ENCODE measurements at regions of chr6 and their contacts with region 1.

Region 1: DNA sequence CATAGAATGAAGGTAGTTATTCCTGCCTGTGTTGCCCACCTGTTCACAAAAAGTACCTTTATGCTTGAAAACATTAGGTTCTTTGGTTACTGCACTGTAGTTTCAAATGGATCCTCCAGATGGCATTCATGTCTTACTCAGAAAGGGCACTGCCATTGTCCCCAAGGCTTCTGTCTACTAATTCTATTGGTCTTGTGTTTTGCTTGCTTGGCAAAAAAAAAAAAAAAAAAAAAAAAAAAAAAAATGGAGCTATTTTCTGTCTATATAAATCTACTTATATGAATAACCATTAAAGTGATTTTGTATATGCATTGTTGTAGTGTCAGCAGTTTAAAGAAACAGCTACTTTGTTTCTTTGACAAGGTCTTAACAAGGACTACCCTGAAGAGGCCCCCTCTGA is 12.7 kb upstream of the EFHC1 start:
- DNase-seq: no peak
- ATAC-seq: peak; percentile 91
- H3K4me3 ChIP-seq: no peak overlapping the region
- H3K27ac ChIP-seq: no peak overlapping the region
- H3K4me1 ChIP-seq: no peaks in the 10 kb centered on the region
- H3K27me3 ChIP-seq: no peaks in the 10 kb centered on the region
- CTCF ChIP-seq: peak; percentile 50 to 59 (median 57); a peak in 5 of 6 replicates
- EP300 ChIP-seq: no peak
- POLR2A ChIP-seq: no peak
- RAD21 ChIP-seq: peak; percentile 70

Region 2: DNA sequence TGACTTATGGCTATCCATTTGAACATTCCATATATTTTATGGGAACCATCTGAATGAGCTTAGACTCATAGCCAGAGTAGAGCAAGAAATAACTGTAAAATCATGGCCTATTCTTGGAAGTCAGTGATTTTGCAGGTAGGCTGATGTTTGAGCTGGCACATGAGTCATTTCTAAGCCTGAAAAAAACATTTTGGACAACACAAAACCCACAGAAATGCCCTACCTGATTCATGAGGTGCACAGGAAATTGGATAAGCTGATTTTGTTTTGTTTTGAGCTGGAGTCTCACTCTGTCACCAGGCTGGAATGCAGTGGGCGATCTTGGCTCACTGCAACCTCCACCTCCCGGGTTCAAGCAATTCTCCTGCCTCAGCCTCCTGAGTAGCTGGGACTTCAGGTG is 763.0 kb before region 1 on chr6:
- CTCF ChIA-PET with region 1: no interaction called
- POLR2A ChIA-PET with region 1: no interaction called
- RAD21 ChIA-PET with region 1: no interaction called
- SMC1A ChIA-PET with region 1: no interaction called
- in situ Hi-C with region 1: no loop called
- intact Hi-C with region 1: no loop called
- DNase-seq: no peak
- ATAC-seq: no peak; the same call in 2 of the 3 replicates
- H3K4me3 ChIP-seq: no peak overlapping the region
- H3K27ac ChIP-seq: no peak overlapping the region
- H3K4me1 ChIP-seq: no peaks in the 10 kb centered on the region
- H3K27me3 ChIP-seq: no peaks in the 10 kb centered on the region
- CTCF ChIP-seq: no peak
- EP300 ChIP-seq: no peak
- POLR2A ChIP-seq: no peak
- RAD21 ChIP-seq: no peak

Region 3: DNA sequence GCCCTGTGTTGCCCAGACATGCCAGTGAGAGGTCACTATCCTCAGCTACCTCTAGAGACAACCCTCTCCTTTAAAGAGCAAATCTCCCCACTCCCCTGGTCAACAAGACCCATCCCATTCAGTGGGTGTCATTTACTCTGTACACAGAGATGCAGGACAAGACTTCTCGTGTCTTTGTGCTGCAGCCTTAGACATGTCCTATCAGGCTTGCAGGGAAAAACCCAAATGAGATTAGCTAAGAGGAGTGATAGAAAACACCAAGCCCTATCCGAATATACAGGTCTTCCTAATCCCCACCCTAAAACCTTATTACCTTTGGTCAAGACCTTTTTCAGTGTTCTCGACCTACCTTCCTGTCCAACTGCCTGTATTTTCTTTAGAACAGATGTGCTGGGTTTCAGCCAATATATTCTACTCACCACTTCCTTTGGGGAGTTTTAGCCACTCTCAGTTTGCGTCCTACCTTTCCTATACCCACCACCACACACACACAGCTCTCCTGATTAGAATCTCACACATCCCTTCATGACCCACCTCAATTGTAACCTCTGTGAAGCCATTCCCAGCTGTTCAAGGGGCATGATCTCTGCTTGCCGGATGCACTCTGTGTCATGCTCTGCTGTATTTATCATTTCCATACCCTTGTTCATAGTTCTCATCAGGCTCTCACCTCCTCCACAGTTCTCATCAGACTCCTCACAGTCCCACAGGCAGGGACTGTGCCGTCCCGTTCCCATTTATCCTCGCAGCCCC is 129.7 kb after region 1 on chr6:
- CTCF ChIA-PET with region 1: no interaction called
- POLR2A ChIA-PET with region 1: no interaction called
- RAD21 ChIA-PET with region 1: no interaction called
- SMC1A ChIA-PET with region 1: no interaction called
- in situ Hi-C with region 1: no loop called
- intact Hi-C with region 1: no loop called
- DNase-seq: peak; percentile 92
- ATAC-seq: peak; percentile 75
- H3K4me3 ChIP-seq: 0 out of 2 replicates have a peak overlapping the region, but pooled peaks have one; percentile 9
- H3K27ac ChIP-seq: peak overlapping the region; percentile 85
- H3K4me1 ChIP-seq: peaks cover 42% of the 10 kb centered on the region
- H3K27me3 ChIP-seq: no peaks in the 10 kb centered on the region
- CTCF ChIP-seq: no peak
- EP300 ChIP-seq: peak; percentile 36 to 48; a peak in 2 of 4 replicates
- POLR2A ChIP-seq: no peak
- RAD21 ChIP-seq: peak; percentile 15; the same call in 1 of the 2 replicates

Region 4: DNA sequence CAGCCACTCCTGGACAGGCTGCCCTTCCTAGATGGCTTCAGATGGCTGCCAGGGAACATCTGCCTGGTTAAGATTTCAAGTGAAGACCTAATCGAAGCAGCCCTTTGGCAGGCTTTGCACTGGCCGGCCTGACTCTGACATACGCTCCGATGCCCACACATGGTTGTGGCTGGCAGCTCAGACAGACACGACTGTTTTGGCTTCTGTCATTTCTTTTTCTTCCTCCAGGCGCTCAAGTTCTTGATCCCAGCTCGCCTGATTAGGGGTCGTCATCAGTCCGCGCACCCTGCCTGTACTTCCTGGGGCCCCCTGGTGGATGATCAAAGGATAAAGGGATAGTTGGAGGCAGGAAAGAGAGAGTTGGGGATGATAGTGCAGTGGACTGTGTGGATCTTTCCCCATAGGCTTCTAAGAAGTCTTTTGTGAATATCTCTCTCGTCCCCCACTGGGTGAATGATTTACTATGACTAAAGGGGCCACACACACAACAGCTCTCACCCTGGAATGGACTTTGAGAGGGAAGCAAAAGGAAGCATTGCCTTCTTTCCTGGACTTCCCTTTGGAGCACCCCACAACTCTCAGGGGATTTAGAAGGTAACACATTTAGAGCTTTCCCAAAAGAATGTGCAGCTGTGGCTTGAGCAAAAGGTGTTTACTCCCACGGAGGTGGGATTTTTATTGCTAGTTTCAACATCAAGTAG is 190.8 kb after region 1 on chr6:
- CTCF ChIA-PET with region 1: interaction called, 10 read pairs
- POLR2A ChIA-PET with region 1: interaction called, 3 read pairs
- RAD21 ChIA-PET with region 1: interaction called, 4 read pairs
- SMC1A ChIA-PET with region 1: interaction called, 4 read pairs
- in situ Hi-C with region 1: no loop called
- intact Hi-C with region 1: no loop called
- DNase-seq: no peak
- ATAC-seq: peak; percentile 53
- H3K4me3 ChIP-seq: no peak overlapping the region
- H3K27ac ChIP-seq: no peak overlapping the region
- H3K4me1 ChIP-seq: peaks cover 30% of the 10 kb centered on the region
- H3K27me3 ChIP-seq: no peaks in the 10 kb centered on the region
- CTCF ChIP-seq: peak; percentile 41 to 60 (median 51)
- EP300 ChIP-seq: no peak
- POLR2A ChIP-seq: no peak
- RAD21 ChIP-seq: peak; percentile 56

Measured in GM12878 (cell line).